Activated T-helper 1 cell treated with anti-CD3 and anti-CD28 coated beads, Interleukin-12 subunit alpha, Interleukin-12 subunit beta, Interleukin-2, Interleukin-4 antibody, amounts not matched to agents 30 ng/mL and 10 ng/mL and 1 ng/mL, durations not matched to agents 14 hours and 24 hours and 36 hours (primary cell): ENCODE measurements at regions of chr5 and their contacts with region 1.

Region 1: DNA sequence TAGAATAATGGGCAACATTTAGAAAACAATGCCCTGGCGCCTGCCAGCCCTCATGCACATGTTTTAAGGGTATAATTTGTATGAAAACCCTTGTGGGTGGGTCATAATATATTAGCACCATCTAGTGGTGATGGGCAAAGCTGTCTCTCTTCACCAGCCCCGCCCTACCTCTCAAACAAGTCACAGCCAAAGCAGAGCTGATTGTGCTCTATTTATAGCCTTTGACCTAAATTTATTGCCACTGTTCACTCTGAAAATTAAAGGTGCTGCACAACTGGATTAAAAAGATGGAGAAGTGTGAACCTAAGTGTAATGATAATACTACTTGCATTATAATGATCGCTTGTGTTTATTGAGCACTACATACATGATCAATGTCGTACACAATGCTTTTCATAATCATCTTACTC is 131.9 kb upstream of the ANKH start:
- DNase-seq: peak; percentile 33
- H3K4me3 Mint-ChIP-seq: no peak overlapping the region
- H3K27ac Mint-ChIP-seq: no peak overlapping the region
- H3K4me1 Mint-ChIP-seq: peaks cover 20% of the 10 kb centered on the region
- H3K27me3 Mint-ChIP-seq: peaks cover 28% of the 10 kb centered on the region

Region 2: DNA sequence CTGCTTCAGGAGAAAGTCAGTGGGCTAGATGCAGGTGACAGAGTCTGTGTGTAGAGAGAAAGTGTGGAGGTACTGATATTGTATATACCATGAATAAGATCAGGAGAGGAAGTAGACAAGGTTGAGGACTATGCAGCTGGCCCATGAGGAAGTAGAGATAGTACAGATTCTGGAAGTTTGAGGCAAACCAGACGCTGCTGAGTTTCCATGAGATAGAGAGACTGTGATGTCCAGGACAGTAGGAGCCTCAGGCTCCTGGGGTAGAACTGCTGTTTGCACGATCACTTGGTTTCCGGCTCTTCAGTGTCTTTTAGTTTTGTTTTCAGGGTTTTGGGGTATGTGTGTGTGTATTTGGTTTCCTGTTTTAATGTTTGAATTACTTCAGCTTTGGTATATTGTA is 408.3 kb before region 1 on chr5:
- intact Hi-C with region 1: loop called (anchors 10 kb)
- DNase-seq: peak; percentile 49
- H3K4me3 Mint-ChIP-seq: peak overlapping the region; percentile 78
- H3K27ac Mint-ChIP-seq: peak overlapping the region; percentile 98
- H3K4me1 Mint-ChIP-seq: peaks cover 76% of the 10 kb centered on the region
- H3K27me3 Mint-ChIP-seq: no peaks in the 10 kb centered on the region

Region 3: GRCh38 chr5:14685757-14686156 is 317.8 kb before region 1 on chr5:
- intact Hi-C with region 1: loop called (anchors 1 kb)
- DNase-seq: no peak
- H3K4me3 Mint-ChIP-seq: no peak overlapping the region
- H3K27ac Mint-ChIP-seq: peak overlapping the region; percentile 93
- H3K4me1 Mint-ChIP-seq: peaks cover 38% of the 10 kb centered on the region
- H3K27me3 Mint-ChIP-seq: no peaks in the 10 kb centered on the region

Region 4: GRCh38 chr5:14946815-14947640 is 56.5 kb before region 1 on chr5:
- intact Hi-C with region 1: loop called (anchors 1 kb)
- DNase-seq: peak; percentile 10
- H3K4me3 Mint-ChIP-seq: no peak overlapping the region
- H3K27ac Mint-ChIP-seq: no peak overlapping the region
- H3K4me1 Mint-ChIP-seq: no peaks in the 10 kb centered on the region
- H3K27me3 Mint-ChIP-seq: no peaks in the 10 kb centered on the region